ENCODE measurements at regions of chr20 and their contacts with region 1.

Region 1: DNA sequence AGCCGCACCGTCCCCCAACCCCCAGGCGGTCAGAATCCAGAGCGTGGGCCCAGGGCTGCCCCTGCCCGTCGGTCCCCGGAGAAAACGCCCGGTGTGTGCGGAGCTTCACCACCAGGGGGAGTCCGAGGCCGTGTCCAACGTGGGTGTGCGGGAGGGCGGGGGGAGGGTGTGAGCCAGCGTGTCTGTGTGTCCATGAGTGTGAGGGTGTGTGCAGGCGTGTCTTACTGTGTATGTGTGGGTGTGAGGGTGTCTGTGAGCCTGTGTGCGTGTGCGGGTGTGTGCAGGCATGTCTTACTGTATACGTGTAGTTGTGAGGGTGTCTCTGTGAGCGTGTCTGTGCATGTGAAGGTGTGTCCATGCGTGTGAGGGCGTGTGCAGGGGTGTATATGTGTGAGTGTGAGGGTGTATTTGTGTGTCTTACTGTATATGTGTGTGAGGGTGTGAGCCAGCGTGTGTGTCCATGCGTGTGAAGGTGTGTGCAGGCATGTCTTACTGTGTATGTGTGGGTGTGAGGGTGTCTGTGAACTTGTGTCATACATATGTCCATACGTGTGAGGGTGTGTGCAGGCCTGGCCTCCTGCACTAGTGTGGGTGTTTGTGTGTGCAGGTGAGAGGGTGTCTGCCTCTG is 24.6 kb upstream of the GATA5 start:
- DNase-seq: peak; percentile 78
- H3K4me3 ChIP-seq: no peak overlapping the region
- H3K27ac ChIP-seq: no peak overlapping the region
- H3K4me1 ChIP-seq: no peaks in the 10 kb centered on the region
- H3K27me3 ChIP-seq: peaks cover 3% of the 10 kb centered on the region
- CTCF ChIP-seq: peak; percentile 82 to 96 (median 91)
- EP300 ChIP-seq: no peak
- POLR2A ChIP-seq: no peak

Region 2: GRCh38 chr20:62409931-62410745 is 90.2 kb before region 1 on chr20:
- in situ Hi-C with region 1: no loop called
- intact Hi-C with region 1: loop called (anchors 5 kb)
- DNase-seq: peak; percentile 73
- H3K4me3 ChIP-seq: peak overlapping the region in 1 of 4 donors; percentile 5
- H3K27ac ChIP-seq: peak overlapping the region; percentile 71 to 92 (median 83)
- H3K4me1 ChIP-seq: peaks cover 39 to 81% (median 74%) of the 10 kb centered on the region in 4 donors
- H3K27me3 ChIP-seq: no peaks in the 10 kb centered on the region
- CTCF ChIP-seq: peak; percentile 23 to 55 (median 42)
- EP300 ChIP-seq: no peak
- POLR2A ChIP-seq: peak; percentile 11

Region 3: GRCh38 chr20:62583420-62583920 is 83.1 kb after region 1 on chr20:
- in situ Hi-C with region 1: no loop called
- intact Hi-C with region 1: loop called (anchors 5 kb)
- DNase-seq: no peak
- H3K4me3 ChIP-seq: no peak overlapping the region
- H3K27ac ChIP-seq: no peak overlapping the region
- H3K4me1 ChIP-seq: peaks cover 0 to 8% (median 6%) of the 10 kb centered on the region in 4 donors
- H3K27me3 ChIP-seq: peaks cover 83% of the 10 kb centered on the region
- CTCF ChIP-seq: peak in 1 of 5 experiments; percentile 11
- EP300 ChIP-seq: no peak
- POLR2A ChIP-seq: no peak

Region 4: GRCh38 chr20:62611819-62612218 is 111.5 kb after region 1 on chr20:
- in situ Hi-C with region 1: loop called (anchors 5 to 10 kb)
- intact Hi-C with region 1: loop called (anchors 2 kb)
- DNase-seq: no peak
- H3K4me3 ChIP-seq: no peak overlapping the region
- H3K27ac ChIP-seq: no peak overlapping the region
- H3K4me1 ChIP-seq: peaks cover 0 to 4% (median 3%) of the 10 kb centered on the region in 4 donors
- H3K27me3 ChIP-seq: peaks cover 14% of the 10 kb centered on the region
- CTCF ChIP-seq: no peak
- EP300 ChIP-seq: no peak
- POLR2A ChIP-seq: no peak

Region 5: DNA sequence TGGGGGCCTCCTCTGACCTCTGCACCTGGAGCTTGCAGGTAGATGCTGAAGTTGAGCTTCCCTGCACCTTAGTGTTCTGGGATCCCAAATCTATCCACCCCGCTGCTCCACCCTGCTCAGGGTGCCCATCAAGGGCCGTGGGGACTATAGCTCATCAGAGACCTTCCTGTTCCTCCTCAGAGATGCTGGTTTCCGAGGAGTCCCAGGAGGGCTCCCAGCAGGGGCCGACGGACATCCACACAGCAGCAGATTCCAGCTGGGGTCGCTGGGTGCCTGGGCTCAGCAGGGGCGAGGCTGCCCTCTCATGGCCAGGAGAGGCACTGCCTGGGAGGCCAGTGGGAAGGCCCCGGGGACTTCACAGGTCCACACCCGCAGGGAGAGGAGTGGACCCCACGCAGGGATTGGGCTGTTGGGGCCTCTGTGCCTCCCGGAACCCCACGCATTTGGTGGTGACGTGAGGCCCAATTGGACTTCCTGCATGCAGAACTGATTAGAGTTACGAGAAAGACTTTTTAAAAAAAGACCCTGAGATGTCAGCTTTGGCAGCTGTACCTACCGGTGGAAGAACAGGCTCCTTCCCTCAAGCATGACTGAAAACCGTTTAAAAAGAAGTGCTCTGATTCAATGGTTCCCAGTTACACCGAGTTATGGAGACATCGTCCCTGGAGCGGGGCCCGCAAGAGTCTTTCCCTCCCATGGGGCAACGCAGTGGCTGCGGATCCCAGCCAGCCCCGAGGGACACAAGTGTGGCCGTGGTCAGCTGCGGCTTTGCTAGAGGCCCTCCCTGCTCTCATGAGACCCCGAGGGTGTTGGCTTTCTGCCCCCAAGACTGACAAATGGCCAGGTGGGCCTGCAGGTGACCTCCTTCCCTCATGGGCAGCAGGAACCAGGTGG is 116.6 kb after region 1 on chr20:
- in situ Hi-C with region 1: loop called (anchors 5 to 10 kb)
- intact Hi-C with region 1: loop called (anchors 2 kb)
- DNase-seq: peak; percentile 80
- H3K4me3 ChIP-seq: no peak overlapping the region
- H3K27ac ChIP-seq: peak overlapping the region in 3 of 4 donors; percentile 34 to 53 (median 35)
- H3K4me1 ChIP-seq: peaks cover 0 to 15% (median 7%) of the 10 kb centered on the region in 4 donors
- H3K27me3 ChIP-seq: no peaks in the 10 kb centered on the region
- CTCF ChIP-seq: peak; percentile 85 to 97 (median 96)
- EP300 ChIP-seq: no peak
- POLR2A ChIP-seq: no peak

Region 6: GRCh38 chr20:62782149-62782892 is 282.0 kb after region 1 on chr20:
- in situ Hi-C with region 1: loop called in 1 of 4 experiments (anchors 10 kb)
- intact Hi-C with region 1: no loop called
- DNase-seq: no peak
- H3K4me3 ChIP-seq: no peak overlapping the region
- H3K27ac ChIP-seq: no peak overlapping the region
- H3K4me1 ChIP-seq: no peaks in the 10 kb centered on the region
- H3K27me3 ChIP-seq: peaks cover 3% of the 10 kb centered on the region
- CTCF ChIP-seq: no peak
- EP300 ChIP-seq: no peak
- POLR2A ChIP-seq: no peak